ENCODE measurements at regions of chr20 and their contacts with region 1.

Region 1: DNA sequence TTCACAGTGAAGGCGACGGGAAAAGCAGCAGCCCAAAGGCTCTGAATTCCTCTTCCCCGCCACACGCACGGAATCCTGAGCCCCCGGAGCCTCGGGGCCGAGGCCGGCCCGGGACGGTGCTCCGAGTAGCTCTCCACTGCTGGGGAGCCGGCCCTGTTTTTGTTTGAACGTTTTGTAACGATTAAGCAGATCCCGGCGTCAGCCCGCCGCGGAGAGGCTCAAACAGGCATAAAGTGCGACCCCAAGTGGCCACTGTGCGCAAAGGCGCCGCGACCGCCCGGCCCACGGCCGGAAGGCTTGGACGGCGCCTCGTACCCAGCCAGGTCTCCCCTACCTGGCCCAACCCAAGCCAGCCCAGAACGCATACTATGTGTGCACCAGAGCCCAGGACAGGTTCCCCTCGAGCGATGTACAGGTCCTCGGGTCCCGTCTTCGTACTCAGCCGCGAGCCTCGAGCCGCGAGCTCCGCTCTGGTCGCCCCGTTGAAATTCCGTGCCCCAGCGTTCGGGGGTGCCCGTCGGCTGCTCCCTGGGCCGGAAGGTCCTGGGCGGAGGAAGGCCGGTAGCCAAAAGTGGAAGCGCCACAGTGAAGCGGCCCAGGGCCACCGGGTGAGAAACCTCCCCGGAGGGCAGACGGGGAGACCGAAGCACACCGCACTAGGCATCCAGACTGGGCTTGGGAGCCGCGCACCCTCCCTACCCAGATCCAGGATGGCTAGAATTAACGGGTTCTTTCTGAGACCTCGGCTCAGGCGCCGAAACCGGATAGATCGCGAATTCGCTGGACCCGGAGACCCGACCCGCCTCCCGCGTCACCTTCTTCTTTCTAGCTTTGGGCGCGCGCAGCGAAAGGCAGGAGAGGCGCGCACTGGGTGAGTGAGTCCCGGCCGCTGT is 1.2 kb upstream of the MAFB start:
- DNase-seq: peak; percentile 89
- CTCF ChIP-seq: peak; percentile 96

Region 2: DNA sequence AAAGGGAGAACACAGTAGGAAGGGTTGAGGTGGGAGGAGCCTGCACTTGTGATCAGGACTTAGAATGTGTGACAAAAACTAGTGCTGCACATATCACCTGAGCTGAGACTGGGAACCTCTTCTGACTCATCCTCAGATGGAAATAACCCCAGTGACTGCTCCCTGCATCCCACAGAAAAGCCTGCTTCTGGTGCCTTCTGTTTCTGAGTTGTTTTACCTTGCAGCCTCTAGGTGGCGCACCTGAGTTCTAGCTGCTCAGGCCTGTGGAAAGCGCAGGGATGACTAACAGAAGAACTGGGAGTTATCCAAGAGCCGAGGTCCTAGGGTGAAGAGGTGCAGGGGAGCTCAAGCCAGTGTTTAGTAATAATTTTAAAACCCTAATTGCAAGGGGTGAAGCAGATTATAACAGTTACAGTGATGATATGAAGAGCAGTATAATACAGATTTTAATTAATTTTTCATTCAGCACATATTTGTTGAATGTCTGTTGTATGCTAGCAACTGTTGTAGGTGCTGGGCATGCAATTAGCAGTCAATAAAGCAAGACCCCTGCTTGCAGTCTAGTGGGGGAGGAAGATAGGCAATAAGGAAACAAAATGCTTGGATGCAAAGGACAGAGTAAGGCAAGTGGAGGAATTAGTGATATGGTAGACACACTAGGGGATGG is 1425.5 kb before region 1 on chr20:
- in situ Hi-C with region 1: loop called (anchors 25 kb)
- DNase-seq: peak; percentile 55
- CTCF ChIP-seq: peak; percentile 79

Region 3: DNA sequence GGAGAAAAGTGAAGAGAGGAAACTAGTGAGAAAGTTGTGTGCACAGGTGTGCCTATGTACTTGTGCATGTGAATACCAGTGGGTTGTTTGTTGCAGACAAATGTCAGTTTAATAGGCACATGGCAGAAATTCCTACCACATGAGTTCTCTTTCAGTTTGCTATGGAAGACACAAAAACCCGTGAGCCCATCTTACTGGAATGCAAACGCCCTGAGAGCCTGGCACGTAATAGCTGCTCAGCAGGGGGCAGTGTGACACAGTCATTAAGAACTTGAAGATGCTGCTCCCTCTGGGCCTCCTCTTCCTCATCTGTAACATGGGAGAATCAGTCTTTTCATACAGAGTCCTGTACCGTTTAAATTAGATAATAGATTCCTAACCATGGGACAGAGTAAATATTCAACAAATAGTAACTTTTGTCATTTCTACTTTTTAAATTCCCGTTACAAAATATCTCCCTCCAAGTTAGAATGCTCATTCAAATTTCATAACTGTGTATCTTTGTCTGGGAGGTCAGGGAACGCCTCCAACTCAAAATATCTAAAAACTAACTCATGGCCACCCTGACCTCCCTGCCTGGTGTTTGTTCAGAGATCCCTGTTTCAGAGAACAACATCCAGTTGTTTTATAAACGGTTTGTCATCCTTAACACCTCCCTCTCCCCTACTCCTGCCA is 804.1 kb before region 1 on chr20:
- in situ Hi-C with region 1: loop called (anchors 10 kb)
- DNase-seq: peak; percentile 15
- CTCF ChIP-seq: peak; percentile 64

Region 4: GRCh38 chr20:40160097-40160550 is 530.1 kb before region 1 on chr20:
- in situ Hi-C with region 1: loop called (anchors 25 kb)
- DNase-seq: peak; percentile 12
- CTCF ChIP-seq: peak; percentile 46

Region 5: DNA sequence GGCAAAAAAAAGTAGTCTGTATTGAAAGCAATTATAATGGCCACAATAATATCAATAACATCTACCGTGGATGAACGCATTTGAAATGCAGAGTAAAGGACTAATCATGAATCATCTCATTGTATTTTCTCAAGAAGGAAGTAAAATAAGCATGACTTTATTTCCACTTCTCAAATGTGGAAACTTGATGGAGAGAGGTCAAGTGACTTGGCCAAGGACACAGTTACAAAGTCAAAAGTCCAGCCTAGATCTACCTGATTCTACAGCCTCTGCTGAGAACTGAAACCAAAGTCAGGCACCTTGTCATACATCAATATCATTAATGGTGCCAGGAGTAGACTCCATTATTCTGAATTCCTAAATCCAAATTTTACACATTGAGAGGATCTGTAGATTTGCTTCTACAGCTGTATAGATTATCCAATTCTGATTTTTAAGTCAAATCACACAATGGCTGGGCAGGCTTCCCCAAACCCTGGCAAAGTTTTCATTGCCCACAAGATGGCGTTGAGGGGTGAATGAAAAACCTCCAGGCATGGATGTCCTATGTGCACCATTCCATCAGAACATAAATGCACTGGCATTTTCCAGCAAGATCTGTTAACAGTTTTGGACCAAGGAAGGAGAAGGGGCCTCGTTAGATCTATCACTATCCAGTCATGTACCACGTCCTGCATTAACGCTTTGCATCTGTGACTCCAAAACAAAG is 424.2 kb before region 1 on chr20:
- in situ Hi-C with region 1: loop called (anchors 25 kb)
- DNase-seq: no peak
- CTCF ChIP-seq: no peak